ENCODE measurements at regions of chr19 and their contacts with region 1.

Region 1: DNA sequence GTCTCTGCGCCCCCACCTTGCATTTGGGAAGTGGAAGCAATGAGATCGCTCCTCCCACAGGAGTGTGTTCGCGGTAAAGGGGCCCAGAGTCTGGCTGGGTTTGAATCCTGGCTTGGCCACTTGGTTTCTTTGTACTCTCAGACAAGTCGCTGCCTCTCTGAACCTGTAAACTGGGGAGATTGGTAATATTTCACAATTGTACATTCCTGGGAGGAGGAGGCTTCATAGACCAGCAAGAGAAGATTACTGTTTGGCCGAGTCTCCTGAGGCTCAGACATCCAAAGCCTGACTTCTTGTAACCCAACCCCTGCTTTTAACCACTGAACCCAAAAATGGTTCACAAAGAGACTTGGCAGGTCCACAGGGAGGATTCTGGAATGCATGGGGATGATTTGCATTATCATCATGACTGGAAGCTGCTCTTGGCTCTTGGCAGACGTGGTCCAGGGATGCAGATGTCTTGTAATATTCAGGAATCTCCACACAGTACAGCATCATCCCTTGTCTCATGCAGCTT is 13.6 kb upstream of the STRN4 start:
- DNase-seq: no peak
- CTCF ChIP-seq: no peak

Region 2: DNA sequence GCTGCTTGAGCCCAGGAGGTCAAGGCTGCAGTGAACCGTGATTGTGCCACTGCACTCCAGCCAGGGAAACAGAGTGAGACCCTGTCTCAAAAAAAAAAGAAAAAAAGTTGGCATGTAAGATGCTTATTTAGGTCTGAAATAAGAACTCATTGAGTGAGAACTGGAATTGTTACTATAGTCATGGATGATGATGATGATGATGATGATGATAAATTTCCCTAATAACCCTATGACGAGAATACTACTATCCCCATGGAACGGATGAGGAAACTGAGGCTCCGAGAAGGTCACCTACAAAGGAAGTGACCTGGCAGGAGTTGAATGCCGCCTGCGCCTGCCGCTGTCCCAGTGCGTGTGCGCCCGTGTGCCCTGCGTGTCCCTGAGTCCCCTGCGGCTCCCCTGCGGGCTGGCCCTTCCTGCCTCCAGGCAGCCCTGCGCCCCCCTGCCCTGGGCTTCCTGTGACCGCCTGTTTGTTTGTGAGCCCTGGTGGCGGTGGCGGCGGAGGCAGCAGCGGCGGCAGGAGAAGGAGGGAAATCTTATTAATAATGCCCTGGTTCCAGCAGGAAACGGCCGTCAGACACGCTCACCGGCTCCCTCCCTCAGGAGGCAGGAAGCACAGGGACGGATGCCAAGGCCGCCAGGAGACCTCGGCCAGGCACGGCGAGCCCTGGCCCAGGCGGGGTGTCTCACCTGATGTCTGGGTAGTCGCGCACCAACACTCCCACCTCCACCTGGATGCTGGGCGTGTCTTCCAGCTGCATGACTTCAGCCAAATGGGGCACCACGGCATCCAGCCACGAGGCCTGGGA is 1544.3 kb before region 1 on chr19:
- in situ Hi-C with region 1: no loop called
- DNase-seq: no peak
- CTCF ChIP-seq: no peak

Region 3: GRCh38 chr19:46586303-46587001 is 173.4 kb before region 1 on chr19:
- in situ Hi-C with region 1: no loop called
- DNase-seq: no peak
- CTCF ChIP-seq: no peak

Region 4: GRCh38 chr19:46840136-46840942 is 80.5 kb after region 1 on chr19:
- in situ Hi-C with region 1: loop called (anchors 5 kb)
- DNase-seq: peak; percentile 78
- CTCF ChIP-seq: peak; percentile 82